H1 (cell line): ENCODE measurements at regions of chr17 and their contacts with region 1.

Region 1: DNA sequence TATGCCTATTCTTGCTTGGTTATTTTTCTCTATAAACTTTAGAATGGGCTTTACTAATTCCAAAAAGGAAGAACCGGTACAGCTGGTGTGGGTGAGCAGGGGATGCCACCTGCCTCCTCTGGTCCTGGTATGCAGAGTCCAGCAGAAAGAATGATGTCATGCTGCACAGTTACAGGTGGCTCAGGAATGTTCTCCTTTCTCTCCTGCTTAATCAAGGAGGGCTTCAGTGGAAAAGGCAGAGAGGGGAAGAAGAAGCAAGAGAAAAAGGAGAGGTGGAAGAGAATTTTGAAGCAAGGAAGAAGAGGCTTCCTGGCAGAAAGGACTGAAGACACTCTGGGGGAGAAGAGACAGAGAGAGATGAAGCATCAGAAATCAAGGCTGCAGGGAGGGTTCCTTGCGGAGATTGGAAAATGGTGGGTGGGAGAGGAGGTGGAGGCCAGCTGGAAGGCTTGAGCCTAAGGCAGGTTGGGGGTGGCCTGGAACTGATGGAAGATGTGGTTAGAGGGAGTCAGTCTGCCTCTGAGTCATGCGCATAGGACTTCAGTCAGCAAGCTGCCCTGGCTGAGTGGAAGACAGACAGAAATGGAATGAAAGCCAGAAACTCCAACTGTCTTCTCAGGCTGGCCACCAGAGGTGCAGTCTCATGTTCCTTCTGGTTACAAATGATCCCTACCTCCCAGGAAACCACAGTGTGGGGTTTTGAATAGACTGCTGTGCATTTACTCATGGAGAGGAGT is 64.6 kb upstream of the CRHR1 start:
- DNase-seq: no peak
- H3K4me3 ChIP-seq: no peak overlapping the region
- H3K27ac ChIP-seq: no peak overlapping the region
- H3K4me1 ChIP-seq: peaks cover 0 to 5% (median 1%) of the 10 kb centered on the region in 4 experiments; a peak in 1 of 7 replicates
- H3K27me3 ChIP-seq: no peaks in the 10 kb centered on the region
- CTCF ChIP-seq: peak; percentile 29 to 69 (median 54)
- EP300 ChIP-seq: no peak
- POLR2A ChIP-seq: no peak
- RAD21 ChIP-seq: peak; percentile 26 to 46; a peak in 3 of 4 replicates

Region 2: DNA sequence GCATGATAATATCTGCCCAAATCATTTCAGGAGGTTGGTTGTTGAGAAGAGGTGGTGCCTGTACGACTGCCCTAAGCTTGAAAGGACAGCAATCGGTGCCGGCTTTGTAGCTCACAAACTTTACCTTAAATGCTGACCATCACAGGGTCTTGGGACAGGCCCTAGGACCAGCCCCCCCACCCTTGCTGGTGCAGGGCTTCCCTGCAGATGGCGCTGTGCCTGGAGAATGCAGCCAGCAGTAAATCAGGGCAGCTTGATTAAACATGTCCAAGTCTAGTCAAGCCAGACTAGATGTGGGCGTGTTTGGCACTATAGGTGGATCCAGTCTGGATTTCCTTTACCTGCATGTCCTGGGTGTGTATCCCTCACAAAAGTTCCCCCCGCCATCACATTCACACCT is 70.9 kb before region 1 on chr17:
- CTCF ChIA-PET with region 1: interaction called, 51 read pairs
- POLR2A ChIA-PET with region 1: no interaction called
- DNase-seq: peak in 1 of 2 experiments; percentile 88
- H3K4me3 ChIP-seq: no peak overlapping the region
- H3K27ac ChIP-seq: no peak overlapping the region
- H3K4me1 ChIP-seq: peaks cover 0 to 5% (median under 1%) of the 10 kb centered on the region in 4 experiments; a peak in 3 of 7 replicates
- H3K27me3 ChIP-seq: no peaks in the 10 kb centered on the region
- CTCF ChIP-seq: peak; percentile 82 to 92 (median 91)
- EP300 ChIP-seq: no peak
- POLR2A ChIP-seq: no peak
- RAD21 ChIP-seq: peak; percentile 60 to 75

Region 3: DNA sequence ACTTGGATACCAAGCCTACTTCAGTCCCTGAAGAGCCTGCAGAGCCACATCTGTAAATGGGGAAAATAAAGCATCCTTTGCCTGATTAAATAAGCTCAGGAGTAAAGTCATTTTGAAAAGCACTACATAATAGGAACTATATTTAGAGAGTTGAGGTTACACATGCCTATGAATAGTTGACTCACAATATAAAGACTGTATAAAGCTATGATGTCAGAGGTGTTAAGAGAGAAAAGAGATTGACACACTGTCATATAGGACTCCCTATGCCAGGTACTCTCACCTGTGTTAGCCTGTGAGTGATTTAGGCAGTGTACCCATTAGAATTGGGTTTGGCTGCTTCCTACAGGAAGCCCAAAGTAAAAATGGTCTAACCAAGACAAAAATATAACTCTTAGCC is 23.1 kb before region 1 on chr17:
- CTCF ChIA-PET with region 1: interaction called, 35 read pairs
- POLR2A ChIA-PET with region 1: no interaction called
- DNase-seq: no peak
- H3K4me3 ChIP-seq: no peak overlapping the region
- H3K27ac ChIP-seq: no peak overlapping the region
- H3K4me1 ChIP-seq: no peaks in the 10 kb centered on the region
- H3K27me3 ChIP-seq: no peaks in the 10 kb centered on the region; a peak in 1 of 7 replicates
- CTCF ChIP-seq: no peak
- EP300 ChIP-seq: no peak
- POLR2A ChIP-seq: no peak
- RAD21 ChIP-seq: no peak

Region 4: DNA sequence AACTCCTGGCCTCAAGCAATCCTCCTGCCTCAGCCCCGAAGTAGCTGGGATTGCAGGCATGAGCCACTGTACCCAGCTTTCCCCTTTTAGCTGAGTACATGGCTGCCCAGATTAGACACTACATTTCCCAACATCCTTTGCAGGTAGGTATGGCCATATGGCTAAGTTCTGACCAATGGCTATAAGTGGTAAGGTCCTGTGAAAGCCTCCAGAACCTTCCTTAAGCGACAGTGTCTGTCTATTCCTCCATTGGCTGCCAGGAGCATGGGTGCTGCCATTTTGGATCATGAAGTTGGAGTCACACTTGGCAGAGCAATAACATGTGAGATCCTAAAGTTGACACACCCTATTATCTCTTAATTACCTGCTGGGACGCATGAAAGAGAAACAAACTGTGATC is 40.3 kb after region 1 on chr17:
- CTCF ChIA-PET with region 1: interaction called, 15 read pairs
- POLR2A ChIA-PET with region 1: no interaction called
- DNase-seq: no peak
- H3K4me3 ChIP-seq: no peak overlapping the region
- H3K27ac ChIP-seq: no peak overlapping the region
- H3K4me1 ChIP-seq: peaks cover 0 to 3% (median 0%) of the 10 kb centered on the region in 4 experiments; a peak in 2 of 7 replicates
- H3K27me3 ChIP-seq: peaks cover 0 to 4% (median under 1%) of the 10 kb centered on the region in 4 experiments; a peak in 3 of 7 replicates
- CTCF ChIP-seq: no peak
- EP300 ChIP-seq: no peak
- POLR2A ChIP-seq: no peak
- RAD21 ChIP-seq: no peak

Region 5: GRCh38 chr17:45812102-45812501 is 92.6 kb after region 1 on chr17:
- CTCF ChIA-PET with region 1: interaction called, 17 read pairs
- POLR2A ChIA-PET with region 1: no interaction called
- DNase-seq: no peak
- H3K4me3 ChIP-seq: no peak overlapping the region
- H3K27ac ChIP-seq: no peak overlapping the region
- H3K4me1 ChIP-seq: peaks cover 0 to 3% (median 0%) of the 10 kb centered on the region in 4 experiments; a peak in 1 of 7 replicates
- H3K27me3 ChIP-seq: no peaks in the 10 kb centered on the region
- CTCF ChIP-seq: peak; percentile 34 to 48 (median 47); a peak in 3 of 4 replicates
- EP300 ChIP-seq: no peak
- POLR2A ChIP-seq: no peak
- RAD21 ChIP-seq: peak; percentile 25 to 45; a peak in 3 of 4 replicates

Region 6: DNA sequence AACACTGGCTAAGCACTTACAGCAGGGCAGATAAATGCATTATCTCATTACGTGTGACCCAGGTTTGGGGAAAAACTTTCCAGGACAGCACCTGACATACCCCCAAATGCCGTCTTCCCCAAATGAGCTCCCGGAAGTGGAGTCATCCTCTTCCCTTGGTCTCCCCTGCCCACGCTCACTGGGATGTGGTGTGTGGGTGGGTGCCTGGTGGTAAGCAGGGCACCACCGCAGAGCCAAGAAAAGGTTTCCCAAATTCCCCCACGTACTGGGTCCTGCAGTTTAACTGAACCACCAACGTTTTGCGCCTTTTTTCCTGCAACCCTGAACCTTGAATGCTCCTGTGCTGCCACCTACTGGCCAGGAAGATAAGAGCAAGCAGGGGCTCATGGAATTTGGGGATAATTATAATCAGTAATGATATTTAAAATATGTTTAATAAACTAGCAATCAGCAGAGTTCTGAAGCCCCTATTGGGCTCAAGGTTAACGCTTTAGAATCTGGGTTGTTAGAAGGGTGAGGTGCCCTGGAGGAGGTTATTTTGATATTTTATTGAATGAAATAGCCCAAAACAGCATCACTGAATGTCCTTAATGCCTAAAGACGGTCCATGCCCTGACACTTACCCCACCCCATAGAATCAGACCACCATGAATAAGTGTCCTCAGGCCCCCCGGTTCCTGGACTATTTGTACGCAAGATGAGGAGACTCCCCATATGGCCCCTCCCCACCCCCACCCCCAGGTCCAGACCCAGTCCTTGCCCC is 133.2 kb after region 1 on chr17:
- CTCF ChIA-PET with region 1: interaction called, 25 read pairs
- POLR2A ChIA-PET with region 1: no interaction called
- DNase-seq: peak; percentile 13 to 86
- H3K4me3 ChIP-seq: no peak overlapping the region
- H3K27ac ChIP-seq: no peak overlapping the region
- H3K4me1 ChIP-seq: 0 out of 7 replicates have a peak, but pooled peaks cover 0 to 3% (median 0%) of the 10 kb centered on the region in 4 experiments
- H3K27me3 ChIP-seq: peaks cover 0 to 4% (median 0%) of the 10 kb centered on the region in 4 experiments; a peak in 2 of 7 replicates
- CTCF ChIP-seq: peak; percentile 49 to 91 (median 87)
- EP300 ChIP-seq: no peak
- POLR2A ChIP-seq: no peak
- RAD21 ChIP-seq: peak; percentile 88 to 93